Lower lobe of right lung (tissue), 2 donors: ENCODE measurements at regions of chr14 and their contacts with region 1.

Region 1: GRCh38 chr14:89027097-89027740 is 202.8 kb downstream of the TTC8 start:
- DNase-seq: peak; percentile 69
- ATAC-seq: peak; percentile 91 to 93
- H3K4me3 ChIP-seq: peak overlapping the region; percentile 60
- H3K27ac ChIP-seq: no peak overlapping the region
- H3K4me1 ChIP-seq: peaks cover 14% of the 10 kb centered on the region
- H3K27me3 ChIP-seq: peaks cover 44% of the 10 kb centered on the region
- CTCF ChIP-seq: peak; percentile 68

Region 2: GRCh38 chr14:88934351-88934806 is 92.8 kb before region 1 on chr14:
- intact Hi-C with region 1: no loop called
- DNase-seq: no peak
- ATAC-seq: no peak
- H3K4me3 ChIP-seq: no peak overlapping the region
- H3K27ac ChIP-seq: no peak overlapping the region
- H3K4me1 ChIP-seq: no peaks in the 10 kb centered on the region
- H3K27me3 ChIP-seq: no peaks in the 10 kb centered on the region
- CTCF ChIP-seq: no peak

Region 3: DNA sequence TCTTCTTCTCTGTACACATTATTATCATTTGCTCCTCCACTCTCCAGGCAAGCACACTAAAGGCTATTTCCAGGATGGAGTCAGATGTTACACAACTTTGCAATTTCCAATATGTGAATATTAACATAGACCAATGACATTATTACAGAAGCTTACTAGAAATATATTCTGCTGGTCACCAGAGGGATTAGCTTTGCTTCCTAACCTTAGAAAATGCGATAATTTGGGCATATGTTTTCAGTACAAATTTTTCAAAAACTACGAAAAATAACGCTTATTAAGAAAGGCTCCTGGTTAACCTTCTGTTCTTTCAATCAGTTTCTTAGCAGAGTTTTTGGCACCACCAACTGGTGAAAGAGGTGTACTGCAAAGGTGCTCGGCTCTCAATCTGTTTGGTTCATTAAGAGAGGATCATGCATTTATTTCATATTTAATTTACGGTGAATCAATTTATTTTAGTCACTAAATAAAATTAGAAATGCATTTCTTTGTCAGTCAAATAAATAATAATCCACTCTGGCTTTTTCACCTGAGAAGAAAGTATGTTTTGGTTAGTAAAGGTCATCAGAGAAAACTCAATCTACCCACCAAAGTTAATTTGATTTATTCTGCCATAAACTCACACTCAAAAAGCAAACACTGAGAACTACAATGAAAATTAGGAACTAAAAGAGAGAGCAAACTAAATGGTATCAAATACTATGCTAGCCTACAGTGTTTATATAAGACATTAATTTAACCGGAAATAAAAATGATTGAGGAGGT is 888.1 kb after region 1 on chr14:
- intact Hi-C with region 1: loop called (anchors 10 kb)
- DNase-seq: no peak
- ATAC-seq: peak; percentile 50 to 64
- H3K4me3 ChIP-seq: no peak overlapping the region
- H3K27ac ChIP-seq: no peak overlapping the region
- H3K4me1 ChIP-seq: peaks cover 22% of the 10 kb centered on the region
- H3K27me3 ChIP-seq: no peaks in the 10 kb centered on the region
- CTCF ChIP-seq: peak; percentile 92